Right ventricle myocardium superior (tissue), 1 donor: ENCODE measurements at regions of chr17 and their contacts with region 1.

Region 1: GRCh38 chr17:55356434-55357328 is 65.0 kb downstream of the MMD start:
- DNase-seq: peak; percentile 59
- ATAC-seq: peak; percentile 91

Region 2: GRCh38 chr17:54992797-54993639 is 363.7 kb before region 1 on chr17:
- intact Hi-C with region 1: loop called (anchors 2 kb)
- DNase-seq: no peak
- ATAC-seq: peak; percentile 60

Region 3: DNA sequence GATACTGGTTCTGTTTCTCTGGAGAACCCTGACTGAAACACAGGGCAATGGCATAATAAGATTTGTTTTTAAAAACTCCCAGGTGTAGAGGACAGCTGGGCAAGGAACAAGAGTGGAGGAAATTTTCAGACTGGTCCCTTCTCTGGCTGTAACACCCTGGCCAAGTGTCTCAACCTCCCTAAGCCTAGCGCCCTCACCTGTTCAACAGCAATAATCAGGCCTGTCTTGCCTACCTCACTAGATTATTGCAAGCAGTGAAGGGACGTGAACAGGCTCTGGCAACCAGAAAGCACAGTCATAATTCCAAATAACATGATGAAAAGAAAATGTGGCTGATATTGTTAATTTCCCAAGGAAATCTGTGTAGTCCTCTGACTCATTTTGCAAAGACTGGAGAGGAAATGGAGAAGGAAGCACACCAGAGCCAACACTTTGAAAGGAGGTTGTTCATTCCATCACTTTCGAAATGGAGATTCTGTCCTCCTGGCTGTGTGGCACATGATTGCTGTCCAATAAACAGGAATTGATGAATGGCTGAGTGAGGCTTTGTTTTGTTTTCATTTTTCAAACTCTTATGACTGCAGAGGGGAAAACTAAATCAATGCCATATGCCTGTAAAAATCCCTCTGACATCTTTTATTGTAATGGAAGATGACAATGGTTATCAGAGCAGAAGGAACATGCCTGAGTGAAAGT is 179.4 kb before region 1 on chr17:
- intact Hi-C with region 1: no loop called
- DNase-seq: no peak
- ATAC-seq: no peak